Cardiac septum (tissue), 1 donor: ENCODE measurements at regions of chr10 and their contacts with region 1.

Region 1: GRCh38 chr10:103632247-103632642 is 138.7 kb downstream of the NEURL1 start:
- DNase-seq: no peak

Region 2: DNA sequence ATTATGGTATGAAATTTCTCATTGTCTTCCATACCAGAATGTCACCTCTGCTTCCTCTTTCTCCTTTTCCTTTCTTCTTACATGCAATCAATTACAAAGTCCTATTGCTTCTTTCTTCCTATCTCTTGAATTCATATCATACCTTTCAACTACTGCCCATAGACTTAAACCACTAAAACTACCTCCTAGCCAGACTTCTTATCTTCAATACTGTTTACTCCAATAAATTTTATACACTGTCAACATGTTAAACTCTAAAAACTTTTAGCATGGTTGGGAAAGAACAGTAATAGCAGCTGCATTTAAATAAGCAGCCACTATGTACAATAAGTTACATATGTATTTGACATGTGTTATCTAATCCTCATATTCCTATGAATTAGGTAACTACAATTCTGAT is 316.2 kb before region 1 on chr10:
- intact Hi-C with region 1: no loop called
- DNase-seq: no peak

Region 3: DNA sequence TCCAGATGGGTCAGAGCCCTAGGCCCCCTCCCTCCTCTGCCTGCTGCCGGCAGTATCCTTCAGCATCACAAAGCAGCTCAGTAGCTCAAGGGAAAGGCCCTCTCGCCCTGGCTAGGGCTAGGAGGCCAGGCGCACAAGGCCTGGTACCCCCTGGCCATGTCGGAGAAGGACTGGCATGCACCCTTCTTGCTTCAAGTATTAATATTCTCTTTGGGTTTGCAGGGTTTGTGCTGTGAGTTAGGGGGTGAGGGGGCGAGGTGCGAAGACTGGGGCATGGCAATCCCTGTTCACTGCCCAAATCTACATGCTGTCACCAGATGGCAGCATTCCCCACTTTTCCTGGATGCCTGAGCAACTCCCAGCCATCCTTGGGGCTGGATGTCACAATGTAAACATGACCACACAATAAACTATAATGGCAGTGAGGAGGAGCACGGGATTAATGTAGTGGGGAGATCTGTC is 33.6 kb before region 1 on chr10:
- intact Hi-C with region 1: loop called (anchors 5 kb)
- DNase-seq: no peak

Region 4: DNA sequence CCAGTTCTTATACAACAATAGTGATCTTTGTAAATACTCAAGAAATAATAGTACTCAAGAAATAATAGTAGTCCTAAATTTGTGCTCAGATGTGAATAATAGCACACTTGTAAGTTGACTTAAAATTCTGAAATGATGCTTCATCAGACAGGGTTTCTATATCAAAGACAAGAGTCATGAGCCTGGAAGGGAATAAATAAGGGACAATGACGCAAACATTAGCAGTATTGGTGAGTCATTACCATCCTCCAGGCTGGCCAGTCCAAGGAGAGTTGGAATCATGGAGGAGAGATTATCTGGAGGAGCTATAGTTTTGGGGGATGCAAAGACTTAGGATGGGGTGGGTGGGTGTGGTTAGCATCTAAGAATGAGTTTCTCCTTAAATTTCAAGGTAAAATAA is 229.3 kb after region 1 on chr10:
- intact Hi-C with region 1: no loop called
- DNase-seq: no peak